AG04449 (cell line): ENCODE measurements at regions of chr15 and their contacts with region 1.

Region 1: GRCh38 chr15:32651229-32651837 is 9.8 kb downstream of the SCG5 start:
- DNase-seq: peak; percentile 33
- H3K4me3 ChIP-seq: no peak overlapping the region
- CTCF ChIP-seq: peak; percentile 90

Region 2: DNA sequence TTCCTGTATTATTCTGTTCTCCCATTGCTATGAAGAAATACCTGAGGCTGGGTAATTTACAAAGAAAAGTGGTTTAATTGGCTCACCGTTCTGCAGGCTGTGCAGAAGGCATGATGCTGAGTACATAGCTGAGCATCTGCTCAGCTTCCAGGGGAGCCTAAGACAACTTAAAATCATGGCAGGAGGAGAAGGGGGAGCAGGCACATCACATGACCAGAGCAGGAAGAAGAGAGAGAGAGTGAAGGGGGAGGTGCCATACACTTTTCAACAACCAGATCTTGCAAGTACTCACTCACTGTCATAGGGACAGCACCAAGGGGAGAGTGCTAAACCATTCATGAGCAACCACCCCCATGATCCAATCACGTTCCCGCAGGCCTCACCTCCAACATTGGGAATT is 432.7 kb before region 1 on chr15:
- CTCF ChIA-PET with region 1: no interaction called
- POLR2A ChIA-PET with region 1: no interaction called
- DNase-seq: no peak
- H3K4me3 ChIP-seq: no peak overlapping the region
- CTCF ChIP-seq: no peak

Region 3: DNA sequence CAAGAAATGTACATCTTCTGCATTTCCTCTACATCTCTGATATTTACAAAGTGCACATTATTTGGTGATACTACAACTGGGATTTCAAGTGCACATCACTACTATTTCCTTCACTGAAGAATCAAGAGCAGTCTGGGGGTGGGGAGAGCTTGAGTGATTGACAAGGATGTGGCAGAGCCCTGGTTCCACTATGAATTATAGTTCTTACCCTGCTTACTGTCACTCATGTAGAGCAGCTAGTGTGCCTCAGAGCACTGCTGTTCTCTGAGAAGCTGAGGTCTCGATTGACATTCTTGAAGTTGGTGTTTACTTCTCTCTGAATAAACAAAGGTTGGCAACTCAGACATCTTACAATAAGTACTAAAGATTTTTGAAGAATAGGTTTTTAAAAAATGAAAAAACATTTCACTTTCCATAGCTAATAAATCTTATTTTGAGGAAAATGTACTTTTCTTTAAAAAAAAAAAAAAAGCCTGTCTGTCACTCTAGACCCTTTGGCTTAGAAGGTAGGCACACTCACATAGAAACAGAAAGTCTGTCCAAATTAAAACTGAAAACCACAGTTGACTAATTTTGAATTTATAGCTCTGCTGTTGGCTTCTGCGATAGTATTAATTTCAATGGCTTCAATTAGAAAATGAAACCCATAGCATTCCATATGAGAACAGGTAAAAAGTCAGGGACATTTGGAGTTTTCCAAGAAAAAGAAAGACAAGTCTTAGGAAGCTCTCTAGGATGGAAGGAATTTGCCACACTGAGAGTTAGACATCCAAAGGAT is 72.0 kb after region 1 on chr15:
- CTCF ChIA-PET with region 1: interaction called, 14 read pairs
- POLR2A ChIA-PET with region 1: interaction called, 3 read pairs
- DNase-seq: no peak
- H3K4me3 ChIP-seq: no peak overlapping the region; the same call in 1 of the 2 replicates
- CTCF ChIP-seq: no peak

Region 4: GRCh38 chr15:32781781-32782180 is 130.4 kb after region 1 on chr15:
- CTCF ChIA-PET with region 1: no interaction called
- POLR2A ChIA-PET with region 1: no interaction called
- DNase-seq: no peak
- H3K4me3 ChIP-seq: no peak overlapping the region
- CTCF ChIP-seq: no peak

Region 5: DNA sequence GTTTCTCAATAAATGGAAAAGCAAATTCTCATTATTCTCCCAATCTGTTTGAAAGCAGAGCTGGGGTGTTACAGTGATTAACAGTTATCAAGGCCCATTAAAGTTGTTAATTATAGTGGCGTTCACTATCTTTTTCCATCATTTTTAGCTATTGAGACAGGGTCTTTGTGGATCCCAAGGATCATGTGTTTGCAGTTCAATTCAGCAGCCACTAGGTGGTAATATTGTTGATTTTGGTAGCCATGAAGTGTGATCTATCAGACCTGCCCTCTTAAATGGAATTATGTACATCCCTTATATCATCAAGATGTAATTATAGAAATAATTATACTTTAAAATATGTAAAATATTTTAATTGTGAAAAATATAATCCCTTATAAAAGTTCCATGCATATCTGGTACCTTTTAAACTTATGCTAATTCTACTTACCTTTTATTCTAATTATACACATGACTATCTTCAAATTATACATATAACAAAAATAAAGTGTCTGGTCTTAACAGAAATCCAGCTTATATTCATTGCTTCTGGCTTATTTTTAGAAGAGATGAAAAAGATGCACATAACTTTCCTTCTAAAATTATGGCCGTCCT is 192.9 kb after region 1 on chr15:
- CTCF ChIA-PET with region 1: interaction called, 35 read pairs
- POLR2A ChIA-PET with region 1: interaction called, 3 read pairs
- DNase-seq: no peak
- H3K4me3 ChIP-seq: no peak overlapping the region
- CTCF ChIP-seq: peak; percentile 48

Region 6: DNA sequence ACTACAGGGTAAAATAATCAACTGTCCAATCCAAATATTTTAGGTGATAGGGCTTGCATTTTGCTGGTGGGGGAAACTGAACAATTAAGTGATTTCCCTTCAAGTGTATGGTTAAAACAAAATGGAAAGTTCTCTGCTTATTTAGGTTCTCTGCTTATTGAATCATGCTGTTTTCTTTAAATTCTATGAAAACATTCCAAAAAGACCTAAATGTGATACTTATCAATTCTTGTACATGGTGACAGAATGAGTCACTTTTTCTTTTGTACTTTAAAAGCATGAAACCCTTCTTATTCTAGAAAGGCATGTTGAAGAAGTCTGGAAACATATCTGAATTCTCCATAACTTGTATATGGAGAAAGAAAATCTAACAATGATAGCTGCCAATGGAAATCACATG is 350.6 kb after region 1 on chr15:
- CTCF ChIA-PET with region 1: interaction called, 150 read pairs
- POLR2A ChIA-PET with region 1: no interaction called
- DNase-seq: no peak
- H3K4me3 ChIP-seq: no peak overlapping the region
- CTCF ChIP-seq: no peak

Region 7: DNA sequence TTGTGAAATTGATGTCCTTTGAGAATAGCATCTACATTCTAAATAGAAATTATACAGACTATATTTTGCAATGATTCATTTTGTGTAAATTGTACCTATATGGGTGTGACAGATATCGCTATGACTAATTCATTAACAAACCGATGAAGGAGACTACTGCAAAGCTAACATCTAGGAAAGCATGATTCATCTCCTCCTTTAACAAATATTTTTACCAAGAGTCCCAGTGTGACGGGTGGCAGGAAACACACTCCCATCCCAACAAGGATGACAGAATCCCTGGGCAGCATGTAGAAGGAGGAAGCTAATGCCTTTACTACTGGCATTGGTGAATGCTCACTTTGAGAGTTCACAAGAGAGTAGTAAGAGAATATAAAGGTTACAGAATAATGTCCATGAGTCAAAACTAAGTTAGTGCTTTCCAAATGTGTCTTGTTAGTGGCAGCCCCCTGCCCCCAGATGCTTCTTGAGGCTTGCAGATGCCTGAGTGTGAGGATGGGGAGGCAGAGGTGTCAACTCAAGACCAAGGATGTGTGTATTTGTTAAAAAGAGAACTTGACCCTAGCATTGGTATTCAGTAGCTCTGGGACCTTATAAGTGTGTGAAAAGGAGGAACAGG is 362.6 kb after region 1 on chr15:
- CTCF ChIA-PET with region 1: interaction called, 18 read pairs
- POLR2A ChIA-PET with region 1: no interaction called
- DNase-seq: no peak
- H3K4me3 ChIP-seq: no peak overlapping the region
- CTCF ChIP-seq: no peak

Region 8: DNA sequence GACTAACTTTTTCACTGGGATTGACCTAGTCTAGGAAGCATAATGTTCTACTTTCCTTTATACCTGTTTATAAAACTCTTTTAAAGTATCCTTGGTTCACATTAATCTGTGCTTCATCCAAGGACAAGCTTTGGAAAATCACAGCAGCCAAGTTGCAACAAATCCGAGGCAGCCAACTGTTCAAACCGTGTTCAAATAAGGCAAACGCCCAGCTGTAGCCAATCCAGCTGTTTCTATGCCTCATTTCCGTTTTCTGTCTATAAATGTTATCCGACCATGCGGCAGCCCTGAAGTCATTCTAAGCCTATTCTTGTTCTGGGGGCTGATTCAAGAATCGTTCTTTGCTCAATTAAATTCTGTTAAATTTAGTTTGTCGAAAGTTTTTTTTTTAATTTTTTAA is 464.9 kb after region 1 on chr15:
- CTCF ChIA-PET with region 1: no interaction called
- POLR2A ChIA-PET with region 1: no interaction called
- DNase-seq: no peak
- H3K4me3 ChIP-seq: no peak overlapping the region
- CTCF ChIP-seq: no peak

Region 9: GRCh38 chr15:33132722-33133345 is 481.5 kb after region 1 on chr15:
- CTCF ChIA-PET with region 1: interaction called, 48 read pairs
- POLR2A ChIA-PET with region 1: no interaction called
- DNase-seq: no peak
- H3K4me3 ChIP-seq: no peak overlapping the region
- CTCF ChIP-seq: peak; percentile 61

Region 10: GRCh38 chr15:33278816-33279612 is 627.7 kb after region 1 on chr15:
- CTCF ChIA-PET with region 1: no interaction called
- POLR2A ChIA-PET with region 1: no interaction called
- DNase-seq: peak; percentile 52
- H3K4me3 ChIP-seq: no peak overlapping the region
- CTCF ChIP-seq: peak; percentile 27